ENCODE measurements at regions of chr1 and their contacts with region 1.

Region 1: DNA sequence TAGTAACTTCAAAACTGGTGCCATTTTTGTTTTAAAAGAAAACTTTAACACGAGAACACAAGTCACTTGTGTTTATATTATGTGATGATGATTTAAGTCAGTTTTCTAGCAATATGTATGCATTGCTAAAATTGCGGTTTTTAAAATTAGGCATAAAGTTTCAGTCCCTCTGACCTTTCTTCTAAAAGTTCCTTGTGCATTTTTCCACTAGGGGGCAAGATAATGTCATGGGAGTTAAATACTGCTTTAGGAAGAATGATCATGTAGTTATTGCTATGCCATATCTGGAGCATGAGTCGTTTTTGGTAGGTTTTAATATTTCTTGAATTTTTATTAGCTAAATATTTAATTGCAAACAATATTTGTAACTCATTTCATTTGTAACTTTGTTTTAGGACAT is 10.7 kb downstream of the CDC7 start:
- DNase-seq: no peak

Region 2: GRCh38 chr1:91754348-91754747 is 243.0 kb after region 1 on chr1:
- intact Hi-C with region 1: no loop called
- DNase-seq: no peak

Region 3: DNA sequence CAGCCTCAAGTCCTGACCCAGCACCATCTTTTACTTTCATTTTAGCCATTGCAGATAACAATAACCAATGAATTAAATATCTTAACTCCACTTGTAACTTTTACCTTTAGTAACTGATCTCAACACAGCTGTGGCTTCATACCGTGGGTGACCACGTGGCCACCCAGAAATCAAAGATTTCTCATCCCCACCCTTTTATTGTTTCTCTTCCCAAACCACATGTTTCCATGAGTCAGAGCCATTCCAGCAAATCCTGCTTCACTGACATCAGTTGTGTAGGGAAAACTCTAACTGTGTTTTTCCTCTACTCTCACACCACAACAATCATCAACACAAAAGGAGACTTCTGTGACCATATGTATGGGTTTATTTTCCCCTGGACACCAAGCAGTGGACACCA is 412.8 kb after region 1 on chr1:
- intact Hi-C with region 1: loop called (anchors 1 kb)
- DNase-seq: no peak